Psoas muscle (tissue), 8 donors: ENCODE measurements at regions of chr3 and their contacts with region 1.

Region 1: DNA sequence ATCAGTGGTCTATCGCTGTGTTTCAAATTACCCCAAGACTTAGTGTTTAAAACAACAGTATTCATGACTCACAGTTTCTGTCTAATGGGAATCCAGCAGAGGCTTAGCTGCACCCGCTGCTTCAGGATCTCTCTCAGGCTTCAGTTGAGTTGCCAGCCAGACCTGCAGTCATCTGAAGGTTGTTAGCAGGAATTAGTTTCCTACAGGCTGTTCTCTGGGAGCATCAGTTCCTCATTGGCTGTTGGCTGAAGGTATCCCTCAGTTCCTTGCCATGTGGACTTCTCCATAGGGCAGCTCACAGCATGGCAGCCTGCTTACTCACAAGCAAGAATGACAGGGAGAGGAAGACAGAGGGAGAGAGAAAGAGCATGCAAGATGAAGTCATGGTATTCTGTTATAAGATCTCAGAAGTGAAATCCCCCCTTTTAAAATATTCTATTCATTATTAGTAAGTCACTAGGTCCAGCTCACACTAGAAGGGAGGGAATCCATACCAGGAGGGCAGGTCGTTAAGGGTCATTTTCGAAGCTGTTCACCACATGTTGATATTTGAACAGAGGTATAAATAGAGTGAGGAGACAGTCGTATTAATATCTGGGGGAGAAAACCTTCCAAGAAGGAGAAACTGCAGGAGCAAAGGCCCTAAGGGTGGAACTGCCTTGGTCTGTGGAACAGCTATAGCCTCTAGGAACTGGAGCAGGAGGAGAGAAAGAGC is 473.9 kb upstream of the PPP2R3A start:
- DNase-seq: peak in 1 of 2 donors; percentile 51
- ATAC-seq: peak in 3 of 4 donors; percentile 68 to 93 (median 71)
- H3K4me3 ChIP-seq: no peak overlapping the region
- H3K27ac ChIP-seq: peak overlapping the region; percentile 12
- H3K4me1 ChIP-seq: peaks cover 4% of the 10 kb centered on the region
- H3K27me3 ChIP-seq: no peaks in the 10 kb centered on the region
- CTCF ChIP-seq: no peak

Region 2: DNA sequence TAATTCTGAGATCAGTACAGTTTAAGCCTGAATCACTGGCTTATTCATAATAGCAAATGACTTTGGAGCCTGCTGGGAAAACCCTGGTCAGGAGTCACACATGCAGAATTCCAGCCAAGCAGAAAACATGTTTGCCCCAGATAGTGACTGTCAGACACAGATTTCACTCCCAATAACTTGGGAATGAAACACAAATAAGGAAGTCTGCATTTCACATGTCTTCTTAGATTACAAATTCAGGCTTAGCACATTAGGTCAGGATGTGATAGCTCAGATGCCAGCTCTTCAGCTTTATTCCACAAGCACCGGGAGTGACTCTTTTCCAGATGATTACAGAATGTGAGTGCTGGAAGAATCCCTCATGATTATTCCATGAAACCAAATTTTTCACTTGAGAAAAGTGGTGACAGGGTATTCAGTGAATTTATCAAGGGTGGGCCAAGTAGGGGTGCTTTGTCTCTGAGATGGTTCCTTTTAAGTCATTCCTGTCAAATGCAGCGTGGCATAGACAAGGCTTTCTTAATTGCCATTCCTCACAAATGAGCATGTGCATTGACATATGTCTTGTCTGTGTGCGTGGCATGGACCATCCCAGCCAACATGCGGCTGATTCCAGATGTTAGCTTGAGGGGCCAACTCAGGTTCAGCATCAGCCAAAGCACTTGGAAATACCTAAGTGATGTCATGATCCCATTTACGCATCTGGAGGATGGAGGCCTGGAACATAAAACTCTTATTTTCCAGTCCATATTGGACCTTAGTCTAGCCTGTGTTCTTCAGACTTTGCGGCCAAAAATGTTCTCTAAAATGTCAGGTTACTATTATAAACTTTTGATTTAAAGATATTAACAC is 505.6 kb before region 1 on chr3:
- intact Hi-C with region 1: loop called in 1 of 2 experiments (anchors 10 kb)
- DNase-seq: no peak
- ATAC-seq: peak in 2 of 4 donors; percentile 34 to 40
- H3K4me3 ChIP-seq: no peak overlapping the region
- H3K27ac ChIP-seq: no peak overlapping the region
- H3K4me1 ChIP-seq: peaks cover 4% of the 10 kb centered on the region
- H3K27me3 ChIP-seq: no peaks in the 10 kb centered on the region
- CTCF ChIP-seq: no peak

Region 3: GRCh38 chr3:135597855-135598254 is 106.2 kb after region 1 on chr3:
- intact Hi-C with region 1: no loop called
- DNase-seq: no peak
- ATAC-seq: no peak
- H3K4me3 ChIP-seq: no peak overlapping the region
- H3K27ac ChIP-seq: no peak overlapping the region
- H3K4me1 ChIP-seq: no peaks in the 10 kb centered on the region
- H3K27me3 ChIP-seq: no peaks in the 10 kb centered on the region
- CTCF ChIP-seq: no peak